ENCODE measurements at regions of chr3 and their contacts with region 1.

Region 1: DNA sequence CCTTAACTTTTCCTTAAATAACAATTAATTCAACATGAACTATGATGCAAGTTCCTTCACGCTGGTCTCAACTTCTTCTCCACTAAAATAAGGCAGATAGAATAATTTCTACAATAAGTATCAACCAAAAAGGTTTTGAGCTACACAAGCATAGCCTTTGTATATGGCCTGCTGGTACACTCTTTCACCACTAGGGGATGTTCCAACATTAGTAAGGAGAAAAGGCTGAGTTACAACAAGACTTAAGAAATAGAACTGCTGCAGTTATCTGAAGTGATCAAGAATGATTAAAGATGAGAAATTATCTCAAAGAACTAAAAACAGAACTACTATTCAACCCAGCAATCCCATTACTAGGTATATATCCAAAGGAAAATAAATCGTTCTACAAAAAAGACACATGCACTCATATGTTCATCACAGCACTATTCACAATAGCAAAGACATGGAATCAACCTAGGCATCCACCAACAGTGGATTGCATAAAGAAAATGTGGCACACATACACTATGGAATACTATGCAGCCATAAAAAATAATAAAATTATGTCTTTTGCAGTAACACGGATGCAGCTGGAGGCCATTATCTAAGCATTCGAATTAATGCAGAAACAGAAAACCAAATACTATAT is 14.4 kb downstream of the ATP13A3 start:
- DNase-seq: no peak
- H3K4me3 ChIP-seq: no peak overlapping the region
- H3K27ac ChIP-seq: no peak overlapping the region
- H3K4me1 ChIP-seq: peaks cover 0 to 5% (median 0%) of the 10 kb centered on the region in 3 donors
- H3K27me3 ChIP-seq: no peaks in the 10 kb centered on the region
- CTCF ChIP-seq: peak; percentile 80 to 97 (median 96)
- POLR2A ChIP-seq: no peak

Region 2: DNA sequence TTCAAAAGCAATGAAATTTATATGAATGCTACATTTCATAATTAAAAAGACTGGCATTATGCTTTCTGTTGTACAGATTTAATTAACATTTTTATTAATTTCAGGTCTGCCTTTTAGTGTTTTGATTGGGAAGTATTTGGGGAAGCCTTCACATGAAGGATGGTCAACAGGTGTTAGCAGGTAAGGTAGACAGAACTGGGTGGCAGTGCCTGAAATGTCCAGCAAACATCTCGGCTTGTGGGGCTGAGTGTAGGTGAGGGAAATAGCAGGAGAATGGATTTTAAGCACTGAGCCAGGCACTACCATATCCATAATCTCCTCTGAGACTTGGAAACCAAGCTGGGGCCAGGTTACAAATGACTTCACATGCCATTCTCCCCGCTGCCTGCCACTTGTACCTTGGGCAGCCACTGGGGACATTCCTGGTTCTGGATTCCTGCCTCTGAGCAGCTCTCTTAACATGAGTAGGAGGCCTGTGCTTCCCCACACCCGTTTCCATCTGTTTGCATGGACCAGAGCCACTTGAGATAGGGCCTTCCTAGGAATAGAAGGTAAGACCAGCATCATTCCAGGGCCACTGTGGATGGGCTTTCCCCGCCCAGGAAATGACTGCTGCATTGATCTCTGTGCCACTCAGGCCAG is 462.4 kb before region 1 on chr3:
- intact Hi-C with region 1: no loop called
- DNase-seq: no peak
- H3K4me3 ChIP-seq: no peak overlapping the region
- H3K27ac ChIP-seq: no peak overlapping the region
- H3K4me1 ChIP-seq: peaks cover 0 to 12% (median 6%) of the 10 kb centered on the region in 3 donors
- H3K27me3 ChIP-seq: peaks cover 0 to 18% (median 0%) of the 10 kb centered on the region in 4 donors
- CTCF ChIP-seq: no peak
- POLR2A ChIP-seq: no peak

Region 3: DNA sequence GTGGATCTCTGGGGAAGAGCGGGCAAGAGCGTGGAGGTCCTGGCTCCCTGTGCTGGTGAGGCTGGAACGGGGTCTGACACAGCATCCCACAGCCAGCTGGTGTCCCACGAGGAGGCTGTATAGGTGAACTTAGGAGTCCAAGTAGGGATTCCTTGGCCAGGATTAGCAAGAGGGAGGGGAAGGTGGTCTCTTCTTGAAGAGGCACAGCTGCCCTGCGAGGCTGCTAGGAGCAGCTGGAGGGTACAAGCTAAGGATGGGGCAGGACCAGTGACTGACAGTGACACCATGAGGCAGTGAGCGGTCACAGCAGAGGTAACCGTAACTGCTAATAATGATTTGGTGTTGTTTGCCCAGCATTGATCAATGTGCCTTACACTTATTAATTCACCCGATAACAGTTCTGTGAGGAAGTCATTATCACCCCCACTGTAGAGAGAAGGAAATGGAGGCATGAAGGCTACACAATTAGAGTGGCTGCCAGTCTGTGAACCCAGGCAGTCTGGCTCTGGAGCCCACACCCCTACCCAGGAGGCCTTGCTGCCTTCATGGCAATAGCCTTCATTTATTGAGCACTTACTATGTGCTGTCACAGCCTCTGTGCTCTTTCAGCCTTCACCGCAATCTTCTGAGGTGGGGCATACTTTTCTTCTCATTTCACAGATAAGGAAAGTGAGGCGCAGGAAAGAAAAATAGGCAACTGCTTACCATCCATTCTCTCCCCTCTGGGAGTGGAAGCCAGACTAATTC is 101.5 kb after region 1 on chr3:
- intact Hi-C with region 1: no loop called
- DNase-seq: no peak
- H3K4me3 ChIP-seq: no peak overlapping the region
- H3K27ac ChIP-seq: peak overlapping the region in 3 of 4 donors; percentile 2 to 81 (median 57)
- H3K4me1 ChIP-seq: peaks cover 12 to 51% (median 21%) of the 10 kb centered on the region in 3 donors
- H3K27me3 ChIP-seq: peaks cover 0 to 19% (median 0%) of the 10 kb centered on the region in 4 donors
- CTCF ChIP-seq: peak in 5 of 6 experiments; percentile 14 to 47 (median 41)
- POLR2A ChIP-seq: no peak

Region 4: DNA sequence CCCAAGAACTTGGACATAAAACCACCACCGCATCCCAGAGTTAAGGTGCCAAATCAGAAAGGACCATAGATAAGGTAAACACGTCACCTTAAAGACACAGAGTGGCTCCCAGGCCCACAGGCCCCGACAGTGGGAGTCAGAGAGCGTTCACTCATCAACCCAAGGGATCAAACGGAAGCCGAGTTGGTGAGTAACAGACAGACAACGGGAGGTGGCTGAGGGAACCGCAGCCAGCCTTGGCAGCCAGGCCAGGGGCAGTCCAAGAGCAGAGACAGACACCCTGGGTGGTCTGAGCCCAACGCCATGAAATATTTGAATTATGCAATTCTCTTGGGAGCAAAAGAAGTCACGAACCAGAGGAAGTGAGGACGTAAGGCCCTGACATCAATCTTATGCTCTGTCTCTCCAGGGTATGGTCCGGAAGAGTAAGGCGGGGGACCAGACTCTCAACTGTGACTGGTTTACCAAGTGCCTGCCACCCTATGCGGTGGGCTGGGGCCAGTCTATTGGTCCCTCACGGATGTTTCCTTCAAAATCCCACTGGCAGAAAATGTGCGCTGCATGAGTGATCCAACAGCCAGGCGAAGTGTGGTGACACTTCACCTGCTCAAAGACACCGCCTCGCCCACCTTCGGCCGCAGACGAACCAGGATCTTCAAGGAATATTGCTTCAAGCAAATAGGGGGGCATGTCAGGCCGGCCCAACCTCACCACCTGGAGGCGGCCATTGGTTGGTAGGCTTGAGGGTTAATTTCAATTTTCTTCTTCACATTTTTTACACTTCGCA is 126.6 kb after region 1 on chr3:
- intact Hi-C with region 1: loop called (anchors 5 kb)
- DNase-seq: no peak
- H3K4me3 ChIP-seq: no peak overlapping the region
- H3K27ac ChIP-seq: no peak overlapping the region
- H3K4me1 ChIP-seq: peaks cover 0 to 6% (median under 1%) of the 10 kb centered on the region in 3 donors
- H3K27me3 ChIP-seq: no peaks in the 10 kb centered on the region
- CTCF ChIP-seq: no peak
- POLR2A ChIP-seq: no peak

Region 5: GRCh38 chr3:194852825-194853537 is 380.6 kb after region 1 on chr3:
- intact Hi-C with region 1: no loop called
- DNase-seq: no peak
- H3K4me3 ChIP-seq: no peak overlapping the region
- H3K27ac ChIP-seq: no peak overlapping the region
- H3K4me1 ChIP-seq: peaks cover 0 to 20% (median 6%) of the 10 kb centered on the region in 3 donors
- H3K27me3 ChIP-seq: no peaks in the 10 kb centered on the region
- CTCF ChIP-seq: no peak
- POLR2A ChIP-seq: no peak

Region 6: DNA sequence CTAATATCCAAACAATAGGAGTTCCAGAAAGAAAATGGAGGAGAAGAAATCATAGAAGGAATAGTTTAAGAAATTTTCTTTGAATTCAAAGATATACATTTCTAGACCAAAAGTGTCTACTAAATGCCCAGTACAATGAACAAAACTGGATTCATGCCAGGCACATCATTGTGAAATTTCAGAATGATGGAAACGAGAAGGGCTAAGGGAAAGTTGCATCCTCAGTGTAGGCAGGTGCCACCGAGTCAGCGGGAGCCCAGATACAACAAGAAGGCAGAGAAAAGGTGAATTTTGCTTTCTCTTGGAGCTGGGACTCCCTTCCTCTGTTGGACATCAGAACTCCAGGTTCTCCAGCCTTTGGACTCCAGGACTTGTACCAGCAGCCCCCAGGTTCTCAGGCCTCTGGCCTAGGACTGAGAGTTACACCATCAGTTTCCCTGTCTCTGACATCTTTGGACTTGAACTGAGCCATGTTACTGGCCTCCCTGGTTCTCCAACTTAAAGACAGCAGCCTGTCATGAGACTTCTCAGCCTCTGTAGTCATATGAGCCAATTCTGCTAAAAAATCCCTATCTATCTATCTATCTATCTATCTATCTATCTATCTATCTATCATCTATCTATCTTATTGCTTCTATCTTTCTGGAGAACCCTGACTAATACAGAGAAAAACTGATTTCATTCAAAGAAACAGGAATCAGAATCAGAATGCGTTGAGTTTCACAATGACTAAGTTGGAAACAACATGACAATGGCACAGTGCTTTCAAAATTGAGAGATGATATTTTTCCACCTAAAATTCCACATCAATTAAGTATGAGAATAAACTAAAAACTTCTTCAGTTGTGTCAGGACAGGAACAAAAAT is 420.9 kb after region 1 on chr3:
- intact Hi-C with region 1: no loop called
- DNase-seq: no peak
- H3K4me3 ChIP-seq: no peak overlapping the region
- H3K27ac ChIP-seq: no peak overlapping the region
- H3K4me1 ChIP-seq: no peaks in the 10 kb centered on the region
- H3K27me3 ChIP-seq: no peaks in the 10 kb centered on the region
- CTCF ChIP-seq: no peak
- POLR2A ChIP-seq: no peak